Heart left ventricle (tissue), 16 donors: ENCODE measurements at regions of chr5 and their contacts with region 1.

Region 1: GRCh38 chr5:110790673-110791072 is 51.9 kb downstream of the SLC25A46 start:
- DNase-seq: no peak
- ATAC-seq: no peak
- H3K4me3 ChIP-seq: no peak overlapping the region
- H3K27ac ChIP-seq: no peak overlapping the region
- H3K4me1 ChIP-seq: no peaks in the 10 kb centered on the region
- H3K27me3 ChIP-seq: no peaks in the 10 kb centered on the region
- CTCF ChIP-seq: peak in 7 of 12 donors; percentile 15 to 48 (median 37)
- POLR2A ChIP-seq: no peak

Region 2: DNA sequence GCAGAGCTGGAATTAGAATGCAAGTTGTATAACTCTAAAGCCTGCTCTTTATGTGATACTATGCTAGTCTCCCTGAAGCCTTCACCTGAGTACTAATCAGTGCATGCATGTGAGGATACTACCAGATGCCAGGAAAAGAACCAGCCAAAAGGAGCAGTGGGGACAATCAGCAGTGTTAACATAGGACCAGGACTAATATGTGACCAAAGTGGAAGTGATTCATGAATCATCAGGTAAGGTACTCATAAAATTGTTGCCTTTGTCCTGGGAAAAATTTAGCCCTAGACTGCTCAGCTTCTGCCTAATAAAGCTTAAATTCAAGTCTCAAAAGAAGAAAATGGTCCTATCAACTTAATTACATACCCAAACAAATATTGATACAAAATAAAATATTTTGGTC is 267.4 kb after region 1 on chr5:
- intact Hi-C with region 1: loop called in 4 of 10 experiments (anchors 10 kb)
- DNase-seq: no peak
- ATAC-seq: no peak
- H3K4me3 ChIP-seq: no peak overlapping the region
- H3K27ac ChIP-seq: no peak overlapping the region
- H3K4me1 ChIP-seq: no peaks in the 10 kb centered on the region
- H3K27me3 ChIP-seq: peaks cover 0 to 6% (median 0%) of the 10 kb centered on the region in 9 donors
- CTCF ChIP-seq: no peak
- POLR2A ChIP-seq: no peak

Region 3: DNA sequence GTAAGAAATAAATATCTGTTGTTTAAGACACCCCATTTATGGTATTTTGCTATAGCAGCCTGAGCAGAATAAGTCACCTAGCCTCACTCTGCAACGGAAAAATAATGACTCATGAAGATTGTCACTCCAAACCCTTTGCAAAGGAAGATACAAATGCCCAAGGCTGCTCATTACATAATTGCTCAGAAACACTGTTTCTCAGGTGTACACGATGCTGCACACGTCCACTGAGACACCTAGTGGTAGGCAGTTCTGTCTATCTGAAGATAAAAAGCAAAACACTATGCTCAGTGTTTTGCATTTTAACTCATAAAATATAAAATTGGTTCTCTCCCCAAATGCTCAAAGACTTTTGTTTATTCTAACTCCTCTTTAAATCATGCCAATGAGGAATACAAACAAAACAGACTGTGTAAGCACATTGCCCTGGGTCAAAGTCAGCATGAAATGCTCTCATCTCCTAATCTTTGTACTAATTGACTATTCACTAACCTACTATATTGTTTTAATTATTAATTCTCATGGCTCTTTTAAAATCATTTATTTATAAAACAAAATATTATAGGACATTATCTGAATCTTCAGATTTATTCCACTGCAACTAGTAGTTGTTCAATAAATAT is 273.1 kb after region 1 on chr5:
- intact Hi-C with region 1: loop called in 4 of 10 experiments (anchors 10 kb)
- DNase-seq: no peak
- ATAC-seq: no peak
- H3K4me3 ChIP-seq: no peak overlapping the region
- H3K27ac ChIP-seq: no peak overlapping the region
- H3K4me1 ChIP-seq: no peaks in the 10 kb centered on the region
- H3K27me3 ChIP-seq: peaks cover 0 to 26% (median 0%) of the 10 kb centered on the region in 9 donors
- CTCF ChIP-seq: peak in 9 of 12 donors; percentile 17 to 55 (median 39)
- POLR2A ChIP-seq: no peak